ENCODE measurements at regions of chr1 and their contacts with region 1.

Region 1: GRCh38 chr1:27656157-27656893 is 15.7 kb downstream of the IFI6 start:
- DNase-seq: no peak
- ATAC-seq: no peak
- H3K4me3 ChIP-seq: no peak overlapping the region
- H3K4me3 Mint-ChIP-seq: no peak overlapping the region
- H3K27ac ChIP-seq: no peak overlapping the region
- H3K27ac Mint-ChIP-seq: no peak overlapping the region
- H3K4me1 ChIP-seq: peaks cover 25% of the 10 kb centered on the region
- H3K4me1 Mint-ChIP-seq: peaks cover 27% of the 10 kb centered on the region
- H3K27me3 ChIP-seq: no peaks in the 10 kb centered on the region
- H3K27me3 Mint-ChIP-seq: no peaks in the 10 kb centered on the region
- CTCF ChIP-seq: no peak

Region 2: GRCh38 chr1:27563341-27563590 is 93.1 kb before region 1 on chr1:
- CTCF ChIA-PET with region 1: no interaction called
- POLR2A ChIA-PET with region 1: no interaction called
- intact Hi-C with region 1: no loop called
- DNase-seq: no peak
- ATAC-seq: no peak
- H3K4me3 ChIP-seq: no peak overlapping the region
- H3K4me3 Mint-ChIP-seq: no peak overlapping the region
- H3K27ac ChIP-seq: no peak overlapping the region
- H3K27ac Mint-ChIP-seq: no peak overlapping the region
- H3K4me1 ChIP-seq: peaks cover 9% of the 10 kb centered on the region
- H3K4me1 Mint-ChIP-seq: peaks cover 24% of the 10 kb centered on the region
- H3K27me3 ChIP-seq: no peaks in the 10 kb centered on the region
- H3K27me3 Mint-ChIP-seq: no peaks in the 10 kb centered on the region
- CTCF ChIP-seq: no peak

Region 3: DNA sequence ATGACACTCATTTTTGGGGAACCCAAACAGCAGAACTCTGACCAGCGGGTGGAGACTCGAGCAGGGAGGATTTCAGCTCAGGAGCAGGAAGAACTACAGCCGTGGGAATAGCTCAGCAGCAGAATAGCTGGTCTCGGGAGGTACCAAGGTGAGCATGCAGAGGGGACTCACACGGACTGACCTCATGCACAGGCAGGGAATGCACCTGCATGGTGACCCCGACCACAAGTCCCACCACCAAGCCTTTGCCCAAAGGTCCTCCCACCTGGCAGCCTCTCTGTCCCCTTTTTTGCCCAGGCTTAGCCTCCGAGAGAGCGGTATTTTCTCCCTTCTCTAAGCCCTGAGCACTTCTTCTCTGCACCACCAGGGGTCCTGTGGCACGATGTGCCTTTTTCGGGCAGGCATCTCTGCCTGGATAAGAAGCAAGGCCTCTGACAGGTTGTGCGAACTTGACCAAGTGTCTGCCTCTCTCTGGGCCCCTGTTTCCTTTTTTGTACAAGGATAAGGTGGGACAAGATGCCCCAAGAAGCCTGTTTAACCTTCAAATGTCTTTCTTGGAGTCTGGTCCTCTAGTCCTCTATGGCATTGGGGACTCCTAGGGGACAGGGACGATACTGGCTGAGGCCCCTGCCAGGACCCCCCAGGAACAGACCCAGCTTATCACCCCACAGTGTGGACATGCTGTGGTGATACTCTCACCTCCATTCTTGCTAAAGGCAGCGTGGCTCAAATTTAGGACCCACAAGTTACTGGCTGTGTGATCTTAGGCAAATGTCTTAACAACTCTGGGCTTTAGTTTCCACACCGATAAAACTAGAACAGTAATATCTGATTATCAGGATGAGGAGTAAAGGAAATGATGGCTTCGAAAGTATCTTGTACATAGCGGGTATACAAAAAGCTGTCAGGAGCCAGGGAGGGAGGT is 12.4 kb before region 1 on chr1:
- CTCF ChIA-PET with region 1: interaction called, 50 read pairs
- POLR2A ChIA-PET with region 1: interaction called, 5 read pairs
- intact Hi-C with region 1: no loop called
- DNase-seq: peak; percentile 45 to 87 (median 75)
- ATAC-seq: peak; percentile 99
- H3K4me3 ChIP-seq: no peak overlapping the region
- H3K4me3 Mint-ChIP-seq: no peak overlapping the region
- H3K27ac ChIP-seq: peak overlapping the region in 1 of 2 experiments; percentile 27
- H3K27ac Mint-ChIP-seq: peak overlapping the region; percentile 37
- H3K4me1 ChIP-seq: peaks cover 18% of the 10 kb centered on the region
- H3K4me1 Mint-ChIP-seq: peaks cover 19% of the 10 kb centered on the region
- H3K27me3 ChIP-seq: no peaks in the 10 kb centered on the region
- H3K27me3 Mint-ChIP-seq: no peaks in the 10 kb centered on the region
- CTCF ChIP-seq: peak; percentile 86

Measured in CD8-positive, alpha-beta T cell (primary cell).